Common myeloid progenitor, CD34-positive (primary cell): ENCODE measurements at regions of chr1 and their contacts with region 1.

Region 1: DNA sequence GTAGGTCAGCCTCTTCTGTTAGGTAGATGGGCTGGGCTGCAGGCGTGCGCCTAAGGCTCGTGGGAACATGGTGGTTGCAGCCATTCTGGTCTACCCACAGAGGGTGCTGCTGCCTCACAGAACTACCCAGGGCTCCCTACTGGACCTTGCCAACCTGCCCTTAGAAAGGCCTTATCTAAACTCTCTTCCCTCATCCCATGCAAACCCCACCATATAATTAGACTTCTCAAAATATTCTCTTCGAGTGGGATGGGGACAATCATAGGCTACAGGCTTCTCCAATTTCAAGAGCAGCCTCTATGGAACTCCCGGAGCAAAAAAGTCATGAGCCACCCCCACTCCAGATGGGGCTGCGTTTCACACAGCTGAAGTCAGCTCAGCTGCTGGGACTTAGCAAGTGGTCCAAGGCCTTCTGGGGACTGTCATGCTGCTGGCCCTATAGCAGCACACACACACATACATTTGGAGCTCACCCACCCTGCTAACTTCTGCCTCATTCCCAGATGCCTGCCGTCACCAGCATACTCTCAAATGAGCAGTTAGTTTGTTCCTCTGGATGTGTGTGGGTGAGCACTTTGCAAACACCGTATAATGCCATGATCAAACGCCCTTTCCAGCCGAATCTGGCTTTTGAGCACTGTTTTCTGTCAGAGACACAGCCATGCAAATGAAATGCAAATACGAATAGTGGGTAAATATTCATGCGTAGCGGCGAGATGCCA is 6.1 kb upstream of the SDHB start:
- DNase-seq: peak; percentile 69 to 81 (median 71)
- H3K4me3 ChIP-seq: no peak overlapping the region
- H3K27ac ChIP-seq: no peak overlapping the region
- H3K4me1 ChIP-seq: peaks cover 0 to 20% (median 2%) of the 10 kb centered on the region in 4 experiments
- H3K27me3 ChIP-seq: no peaks in the 10 kb centered on the region

Region 2: DNA sequence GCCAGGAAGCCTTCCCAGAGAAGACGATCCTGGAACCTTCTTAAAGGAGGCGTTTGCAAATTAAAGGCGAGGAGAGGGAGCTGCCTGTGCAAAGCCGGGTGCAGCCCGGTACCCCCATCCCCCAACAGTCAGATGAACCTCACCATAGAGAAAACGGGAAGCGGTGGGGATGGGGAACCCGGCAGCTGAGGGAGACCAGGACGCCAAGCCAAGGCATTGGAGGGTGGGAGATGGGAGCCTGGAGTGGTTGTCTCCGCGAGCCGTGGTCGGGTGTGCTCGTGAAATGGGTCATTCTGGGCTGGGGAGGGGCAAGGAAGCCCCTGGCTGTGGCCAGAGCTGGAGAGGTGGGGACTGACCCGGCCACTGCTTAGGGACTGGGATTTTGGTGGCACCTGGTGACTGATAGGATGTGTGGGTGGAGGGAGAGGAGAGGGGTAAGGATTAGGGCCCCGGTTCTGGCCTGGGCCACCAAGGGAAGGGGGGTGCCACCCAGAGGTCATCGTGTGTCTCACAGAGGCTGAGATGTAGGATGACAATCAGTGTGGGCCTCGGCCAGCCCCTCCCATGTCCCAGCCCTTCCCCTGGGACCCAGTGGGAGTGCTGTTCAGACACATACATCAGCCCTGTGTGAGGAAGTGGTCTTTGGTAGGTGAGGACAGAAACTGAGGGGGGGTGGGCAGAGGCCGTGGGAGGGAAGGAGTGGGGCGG is 60.0 kb after region 1 on chr1:
- CTCF ChIA-PET with region 1: interaction called, 21 read pairs
- POLR2A ChIA-PET with region 1: no interaction called
- DNase-seq: peak in 2 of 3 donors; percentile 67 to 68
- H3K4me3 ChIP-seq: peak overlapping the region in 6 of 7 experiments; percentile 44 to 72 (median 61)
- H3K27ac ChIP-seq: no peak overlapping the region
- H3K4me1 ChIP-seq: peaks cover 6 to 49% (median 32%) of the 10 kb centered on the region in 4 experiments
- H3K27me3 ChIP-seq: peaks cover 0 to 27% (median 16%) of the 10 kb centered on the region in 5 experiments